ENCODE measurements at regions of chr1 and their contacts with region 1.

Region 1: DNA sequence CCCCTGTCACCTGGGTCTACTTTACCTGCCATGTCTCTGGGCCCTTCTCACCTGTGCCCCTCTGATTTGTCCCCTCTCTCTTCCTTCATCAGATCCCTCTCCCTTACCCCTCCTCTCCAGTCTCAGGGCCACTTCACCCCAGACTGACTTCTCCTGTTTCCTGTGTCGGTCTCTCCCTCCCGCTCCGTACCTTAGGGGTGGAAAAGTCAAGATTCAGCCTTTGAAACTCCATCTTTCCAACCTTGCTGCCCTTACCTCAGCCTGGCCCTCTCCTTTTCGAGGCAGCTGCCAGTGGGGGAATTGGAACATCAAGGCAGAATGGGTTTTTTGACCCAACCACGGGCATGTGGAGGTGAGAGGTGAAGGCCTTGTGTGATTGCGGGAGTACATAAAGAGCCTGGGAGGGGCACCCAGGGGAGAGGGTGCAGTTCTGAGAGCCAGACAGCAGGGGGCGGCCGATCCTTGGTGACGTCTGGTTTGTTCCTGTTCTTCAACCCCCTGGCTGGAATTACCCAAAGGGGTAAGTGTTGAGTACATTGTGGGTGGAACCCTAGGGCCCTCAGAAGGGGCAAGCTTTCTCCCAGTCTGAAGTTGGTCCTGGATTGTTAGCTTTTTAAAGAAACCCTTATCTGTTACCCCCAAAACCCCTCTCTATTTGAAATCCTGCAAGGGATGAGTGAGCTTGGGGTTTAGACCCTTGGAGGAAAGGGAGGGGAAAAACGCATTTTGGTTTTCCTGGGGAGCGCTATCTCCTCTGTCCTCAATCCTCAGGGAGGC is 12.3 kb upstream of the DMBX1 start:
- DNase-seq: peak; percentile 92
- H3K27ac ChIP-seq: no peak overlapping the region
- CTCF ChIP-seq: peak; percentile 87

Region 2: GRCh38 chr1:46487818-46488218 is 10.5 kb after region 1 on chr1:
- CTCF ChIA-PET with region 1: interaction called, 13 read pairs
- POLR2A ChIA-PET with region 1: no interaction called
- DNase-seq: no peak
- H3K27ac ChIP-seq: no peak overlapping the region
- CTCF ChIP-seq: no peak

Region 3: GRCh38 chr1:46522184-46522968 is 45.0 kb after region 1 on chr1:
- CTCF ChIA-PET with region 1: interaction called, 20 read pairs
- POLR2A ChIA-PET with region 1: no interaction called
- DNase-seq: peak; percentile 26
- H3K27ac ChIP-seq: peak overlapping the region; percentile 75
- CTCF ChIP-seq: no peak

Region 4: GRCh38 chr1:46527474-46528296 is 50.3 kb after region 1 on chr1:
- CTCF ChIA-PET with region 1: interaction called, 20 read pairs
- POLR2A ChIA-PET with region 1: no interaction called
- DNase-seq: peak; percentile 80
- H3K27ac ChIP-seq: no peak overlapping the region
- CTCF ChIP-seq: peak; percentile 93